ENCODE measurements at regions of chr5 and their contacts with region 1.

Region 1: DNA sequence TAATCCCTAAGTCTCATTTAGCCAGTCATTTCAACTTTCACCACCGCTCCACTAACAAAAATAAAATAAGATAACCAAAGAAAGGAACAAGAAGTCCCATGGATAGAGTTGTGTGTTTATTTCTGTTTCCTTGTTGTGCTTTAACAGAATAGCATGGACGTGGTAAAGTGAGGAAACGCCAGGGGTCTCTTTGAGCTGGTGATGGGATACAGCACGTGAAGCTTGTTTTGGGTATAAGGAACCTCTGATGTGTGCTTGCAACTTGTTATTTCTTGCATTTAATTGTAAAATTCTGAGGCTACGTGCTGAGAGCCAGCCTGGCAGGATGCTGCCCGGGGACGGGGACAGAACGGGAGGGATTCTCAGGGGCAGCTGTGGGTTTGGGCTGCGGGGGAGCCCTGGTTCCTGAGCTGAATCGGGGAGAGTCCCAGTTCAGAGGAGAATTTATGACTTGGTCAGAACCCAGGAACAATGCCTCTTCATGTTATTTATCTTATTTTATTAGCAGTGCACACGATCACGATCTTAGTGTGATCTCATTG is 63.4 kb downstream of the ANKRD33B start:
- DNase-seq: no peak
- ATAC-seq: peak; percentile 7 to 39 (median 24)
- H3K4me3 ChIP-seq: peak overlapping the region in 2 of 4 donors; percentile 19 to 34
- H3K27ac ChIP-seq: peak overlapping the region in 2 of 4 donors; percentile 24 to 35
- H3K4me1 ChIP-seq: peaks cover 0 to 5% (median 0%) of the 10 kb centered on the region in 3 donors
- H3K27me3 ChIP-seq: no peaks in the 10 kb centered on the region
- CTCF ChIP-seq: no peak

Region 2: GRCh38 chr5:10445352-10445751 is 181.9 kb before region 1 on chr5:
- intact Hi-C with region 1: loop called in 2 of 3 experiments (anchors 5 kb)
- DNase-seq: no peak
- ATAC-seq: no peak
- H3K4me3 ChIP-seq: no peak overlapping the region
- H3K27ac ChIP-seq: no peak overlapping the region
- H3K4me1 ChIP-seq: peaks cover 0 to 7% (median 2%) of the 10 kb centered on the region in 3 donors
- H3K27me3 ChIP-seq: no peaks in the 10 kb centered on the region
- CTCF ChIP-seq: no peak

Region 3: GRCh38 chr5:10452768-10453331 is 174.4 kb before region 1 on chr5:
- intact Hi-C with region 1: loop called in 2 of 3 experiments (anchors 5 kb)
- DNase-seq: no peak
- ATAC-seq: peak; percentile 69 to 92 (median 90)
- H3K4me3 ChIP-seq: no peak overlapping the region
- H3K27ac ChIP-seq: no peak overlapping the region
- H3K4me1 ChIP-seq: no peaks in the 10 kb centered on the region
- H3K27me3 ChIP-seq: no peaks in the 10 kb centered on the region
- CTCF ChIP-seq: peak in 3 of 4 donors; percentile 15 to 38 (median 34)

Measured in pancreas (tissue), 10 donors.